Heart right ventricle (tissue), 16 donors: ENCODE measurements at regions of chr13 and their contacts with region 1.

Region 1: DNA sequence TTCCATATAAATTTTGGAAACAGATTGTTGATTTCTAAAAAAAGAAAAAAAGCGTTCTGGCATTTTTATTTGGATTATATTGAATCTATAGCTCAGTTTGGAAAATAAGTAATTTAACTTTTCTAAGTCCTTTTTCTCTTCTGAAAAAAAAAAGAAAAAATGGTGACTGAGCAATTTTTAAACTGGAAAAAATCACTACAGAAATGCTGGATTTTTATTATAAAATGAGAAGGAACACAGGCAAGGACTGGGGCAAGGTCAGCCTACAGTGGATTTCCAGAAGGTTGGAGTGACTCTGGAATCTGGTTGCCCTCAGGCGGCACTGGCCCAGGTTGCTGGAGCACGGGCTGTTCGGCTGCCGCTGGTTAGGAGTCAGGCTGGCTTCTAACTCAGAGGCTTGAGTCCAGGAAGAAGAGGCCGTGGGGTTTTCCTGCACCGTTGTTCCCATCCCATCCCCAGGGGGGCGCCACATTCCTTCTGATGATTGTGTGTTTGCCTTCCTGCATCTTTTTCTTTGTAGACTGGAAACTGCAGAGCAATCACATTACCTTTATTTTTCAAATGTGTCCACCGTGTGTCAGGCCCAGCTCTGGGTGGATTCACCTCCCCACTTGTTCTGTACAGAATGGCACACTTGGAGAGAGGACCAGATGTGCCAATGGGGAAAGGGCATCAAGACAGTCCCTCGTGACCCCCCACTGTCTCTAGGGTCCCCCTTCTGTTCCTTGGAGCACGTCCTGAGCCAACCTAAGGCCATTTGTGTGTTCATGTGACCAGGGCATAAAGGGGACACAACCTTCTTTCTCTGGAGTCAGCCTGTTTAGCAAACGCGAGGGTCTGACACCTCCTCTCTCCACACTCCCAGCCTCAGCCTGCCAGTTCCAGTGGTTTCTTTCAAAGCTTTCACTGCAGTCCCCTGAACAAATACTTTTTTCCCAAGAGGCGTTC is 44.5 kb upstream of the GTF3A start:
- DNase-seq: peak in 1 of 2 donors; percentile 39
- ATAC-seq: peak in 3 of 8 donors; percentile 52 to 71 (median 54)
- H3K4me3 ChIP-seq: no peak overlapping the region
- H3K27ac ChIP-seq: no peak overlapping the region
- H3K4me1 ChIP-seq: peaks cover 0 to 1% (median 0%) of the 10 kb centered on the region in 9 donors
- H3K27me3 ChIP-seq: peaks cover 0 to 49% (median 11%) of the 10 kb centered on the region in 7 donors
- CTCF ChIP-seq: peak; percentile 19 to 64 (median 57)

Region 2: GRCh38 chr13:27339299-27339698 is 40.7 kb before region 1 on chr13:
- intact Hi-C with region 1: no loop called
- DNase-seq: no peak
- ATAC-seq: peak in 1 of 8 donors; percentile 55
- H3K4me3 ChIP-seq: no peak overlapping the region
- H3K27ac ChIP-seq: no peak overlapping the region
- H3K4me1 ChIP-seq: no peaks in the 10 kb centered on the region
- H3K27me3 ChIP-seq: peaks cover 0 to 19% (median 9%) of the 10 kb centered on the region in 7 donors
- CTCF ChIP-seq: peak in 8 of 9 donors; percentile 15 to 55 (median 42)

Region 3: GRCh38 chr13:27523346-27524073 is 143.5 kb after region 1 on chr13:
- intact Hi-C with region 1: loop called in 1 of 10 experiments (anchors 10 kb)
- DNase-seq: peak in 1 of 2 donors; percentile 23
- ATAC-seq: peak in 3 of 8 donors; percentile 27 to 71 (median 51)
- H3K4me3 ChIP-seq: no peak overlapping the region
- H3K27ac ChIP-seq: no peak overlapping the region
- H3K4me1 ChIP-seq: peaks cover 0 to 4% (median 0%) of the 10 kb centered on the region in 9 donors
- H3K27me3 ChIP-seq: peaks cover 0 to 30% (median 0%) of the 10 kb centered on the region in 7 donors
- CTCF ChIP-seq: no peak